ENCODE measurements at regions of chr21 and their contacts with region 1.

Region 1: GRCh38 chr21:44927587-44928461 is 7.1 kb upstream of the ITGB2 start:
- DNase-seq: no peak
- ATAC-seq: peak; percentile 70
- H3K4me3 ChIP-seq: peak overlapping the region in 1 of 2 experiments; percentile 20; a peak in 2 of 4 replicates
- H3K27ac ChIP-seq: peak overlapping the region; percentile 78
- H3K4me1 ChIP-seq: peaks cover 27% of the 10 kb centered on the region
- H3K27me3 ChIP-seq: no peaks in the 10 kb centered on the region
- CTCF ChIP-seq: no peak

Region 2: DNA sequence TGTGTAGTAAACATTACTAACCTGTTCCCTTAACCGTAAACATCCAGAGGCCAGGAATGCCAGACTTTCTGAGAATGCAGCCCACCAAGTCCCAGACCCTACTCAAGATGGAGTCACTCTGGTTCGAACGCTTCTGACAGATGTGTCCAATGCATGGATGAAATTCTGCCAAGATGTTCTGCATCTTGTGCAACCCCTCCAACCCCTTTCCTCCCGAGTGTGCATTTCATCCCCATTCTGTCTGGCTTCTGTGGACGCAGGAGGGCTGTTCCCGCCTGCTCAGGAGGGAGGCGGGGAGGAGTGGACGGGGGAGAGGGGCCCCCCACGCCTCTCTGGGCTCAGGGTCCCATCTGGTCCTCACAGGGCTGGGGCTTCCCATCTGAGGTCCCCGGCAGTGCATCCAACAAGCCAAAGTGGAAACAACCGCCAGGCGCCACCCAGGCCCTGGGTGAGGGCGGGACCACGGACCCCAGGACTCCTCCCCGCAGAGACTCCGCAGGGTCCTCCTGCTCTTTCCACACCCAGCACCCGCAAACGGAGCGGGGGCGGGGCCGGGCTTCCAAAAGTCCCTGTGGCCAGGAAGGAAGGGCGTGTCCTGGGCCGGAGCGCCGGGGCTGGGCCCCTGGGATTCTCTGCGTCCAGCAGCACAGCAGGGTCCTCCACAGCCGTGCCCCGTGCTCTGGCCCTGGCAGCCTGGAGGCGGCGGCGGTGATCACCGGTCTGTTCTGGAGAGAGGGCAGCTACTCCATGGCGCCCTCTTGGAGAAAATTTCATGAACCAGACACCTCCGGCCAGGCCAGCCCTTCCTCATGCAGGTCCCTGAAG is 82.2 kb before region 1 on chr21:
- CTCF ChIA-PET with region 1: no interaction called
- POLR2A ChIA-PET with region 1: no interaction called
- in situ Hi-C with region 1: no loop called
- intact Hi-C with region 1: no loop called
- DNase-seq: no peak
- ATAC-seq: peak; percentile 86
- H3K4me3 ChIP-seq: peak overlapping the region; percentile 25 to 46
- H3K27ac ChIP-seq: peak overlapping the region; percentile 68
- H3K4me1 ChIP-seq: peaks cover 15% of the 10 kb centered on the region
- H3K27me3 ChIP-seq: no peaks in the 10 kb centered on the region
- CTCF ChIP-seq: no peak; the same call in 1 of the 2 replicates

Region 3: DNA sequence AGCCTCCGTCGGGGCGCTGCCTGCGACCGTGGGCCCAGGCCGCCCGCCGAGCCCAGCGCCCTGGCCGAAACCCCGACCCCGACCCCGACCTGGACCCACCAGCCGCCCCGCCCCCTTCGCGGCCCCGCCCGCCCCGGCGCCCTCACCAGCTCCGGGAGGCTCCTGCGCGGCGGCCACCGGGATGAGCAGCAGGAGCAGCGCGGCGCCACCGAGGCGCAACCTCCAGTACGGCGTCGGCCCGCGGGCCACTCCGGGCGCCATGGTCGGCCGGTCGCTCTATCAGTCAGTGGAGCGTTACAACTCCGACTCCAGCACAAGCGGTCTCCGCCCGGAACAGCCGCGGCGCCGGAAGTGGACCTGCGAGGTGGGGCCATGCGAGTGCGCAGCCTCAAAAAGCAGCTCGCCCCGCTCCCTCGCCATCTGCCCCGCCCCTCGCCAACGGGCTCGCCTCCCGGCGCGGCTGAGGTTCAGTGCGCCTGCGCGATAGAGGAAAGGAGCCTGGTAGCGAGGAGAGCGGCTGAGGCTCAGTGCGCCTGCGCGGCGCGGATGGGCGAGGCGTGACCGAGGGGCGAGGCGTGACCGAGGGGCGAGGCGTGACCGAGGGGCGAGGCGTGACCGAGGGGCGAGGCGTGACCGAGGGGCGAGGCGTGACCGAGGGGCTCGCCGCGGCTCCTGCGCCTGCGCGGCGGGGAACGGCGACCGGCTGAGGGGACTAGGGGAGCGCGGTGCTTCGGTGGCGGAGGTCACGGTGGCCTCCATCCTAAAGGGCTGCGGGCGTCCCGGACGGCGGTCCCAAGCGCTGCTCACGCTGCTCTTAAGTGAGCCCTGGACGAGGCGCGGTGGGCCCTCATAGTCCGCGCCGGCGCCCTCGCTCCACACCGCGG is 54.2 kb before region 1 on chr21 and contains the start of gene PTTG1IP:
- CTCF ChIA-PET with region 1: interaction called, 5 read pairs
- POLR2A ChIA-PET with region 1: no interaction called
- in situ Hi-C with region 1: no loop called
- intact Hi-C with region 1: loop called (anchors 10 kb)
- DNase-seq: no peak
- ATAC-seq: peak; percentile 77
- H3K4me3 ChIP-seq: peak within 1 kb of the TSS; percentile 81 to 85
- H3K27ac ChIP-seq: peak within 1 kb of the TSS; percentile 95
- H3K4me1 ChIP-seq: peaks cover 27% of the 10 kb centered on the region
- H3K27me3 ChIP-seq: no peaks in the 10 kb centered on the region
- CTCF ChIP-seq: no peak
- total RNA-seq, gene PTTG1IP: 226 TPM

Region 4: GRCh38 chr21:44892536-44893277 is 35.1 kb before region 1 on chr21:
- CTCF ChIA-PET with region 1: interaction called, 9 read pairs
- POLR2A ChIA-PET with region 1: no interaction called
- in situ Hi-C with region 1: no loop called
- intact Hi-C with region 1: loop called (anchors 5 kb)
- DNase-seq: no peak
- ATAC-seq: peak; percentile 83
- H3K4me3 ChIP-seq: no peak overlapping the region
- H3K27ac ChIP-seq: no peak overlapping the region
- H3K4me1 ChIP-seq: no peaks in the 10 kb centered on the region
- H3K27me3 ChIP-seq: no peaks in the 10 kb centered on the region
- CTCF ChIP-seq: peak; percentile 92

Region 5: GRCh38 chr21:44914176-44914874 is 13.5 kb before region 1 on chr21:
- CTCF ChIA-PET with region 1: no interaction called
- POLR2A ChIA-PET with region 1: interaction called, 15 read pairs
- in situ Hi-C with region 1: no loop called
- intact Hi-C with region 1: no loop called
- DNase-seq: no peak
- ATAC-seq: no peak
- H3K4me3 ChIP-seq: peak overlapping the region in 1 of 2 experiments; percentile 47; a peak in 2 of 4 replicates
- H3K27ac ChIP-seq: peak overlapping the region; percentile 78
- H3K4me1 ChIP-seq: peaks cover 39% of the 10 kb centered on the region
- H3K27me3 ChIP-seq: no peaks in the 10 kb centered on the region
- CTCF ChIP-seq: no peak

Region 6: GRCh38 chr21:45330075-45330781 is 402.4 kb after region 1 on chr21:
- CTCF ChIA-PET with region 1: no interaction called
- POLR2A ChIA-PET with region 1: interaction called, 11 read pairs
- in situ Hi-C with region 1: no loop called
- intact Hi-C with region 1: no loop called
- DNase-seq: no peak
- ATAC-seq: peak; percentile 73
- H3K4me3 ChIP-seq: peak overlapping the region in 1 of 2 experiments; percentile 24; a peak in 2 of 4 replicates
- H3K27ac ChIP-seq: peak overlapping the region; percentile 90
- H3K4me1 ChIP-seq: peaks cover 81% of the 10 kb centered on the region
- H3K27me3 ChIP-seq: no peaks in the 10 kb centered on the region
- CTCF ChIP-seq: no peak